Calu3 (cell line): ENCODE measurements at regions of chr7 and their contacts with region 1.

Region 1: GRCh38 chr7:73451780-73452398 is 18.3 kb downstream of the FZD9 start:
- DNase-seq: peak; percentile 24
- H3K4me3 Mint-ChIP-seq: no peak overlapping the region
- H3K27ac Mint-ChIP-seq: no peak overlapping the region
- H3K4me1 Mint-ChIP-seq: no peaks in the 10 kb centered on the region
- H3K27me3 Mint-ChIP-seq: no peaks in the 10 kb centered on the region
- CTCF ChIP-seq: peak; percentile 70

Region 2: DNA sequence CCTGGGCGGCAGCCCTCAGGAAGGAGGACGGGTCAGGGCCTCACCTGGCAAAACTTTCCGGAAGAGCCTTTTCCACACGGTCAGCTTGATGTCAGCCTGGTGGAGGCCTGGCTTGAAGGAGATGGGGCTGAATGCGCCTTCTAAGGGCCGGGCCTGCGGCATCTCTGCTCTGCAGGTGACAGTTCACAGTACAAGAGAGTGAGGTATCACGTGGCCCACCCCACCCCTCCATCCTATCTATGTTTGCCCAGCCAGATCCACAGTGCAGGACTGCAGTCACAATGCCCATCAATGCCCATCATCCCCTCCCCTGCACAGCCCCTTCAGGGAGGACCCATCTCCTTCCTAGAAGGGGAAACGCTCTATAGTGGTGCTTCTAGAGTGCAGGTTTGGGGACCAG is 135.4 kb before region 1 on chr7:
- CTCF ChIA-PET with region 1: no interaction called
- intact Hi-C with region 1: loop called (anchors 5 kb)
- DNase-seq: no peak
- H3K4me3 Mint-ChIP-seq: no peak overlapping the region
- H3K27ac Mint-ChIP-seq: no peak overlapping the region
- H3K4me1 Mint-ChIP-seq: no peaks in the 10 kb centered on the region
- H3K27me3 Mint-ChIP-seq: no peaks in the 10 kb centered on the region
- CTCF ChIP-seq: no peak